ENCODE measurements at regions of chr15 and their contacts with region 1.

Region 1: GRCh38 chr15:31405200-31405920 is 78.7 kb downstream of the KLF13 start:
- DNase-seq: peak in 3 of 9 experiments; percentile 46 to 52 (median 46)
- ATAC-seq: peak; percentile 70
- H3K4me3 ChIP-seq: no peak overlapping the region
- H3K4me3 Mint-ChIP-seq: no peak overlapping the region
- H3K27ac ChIP-seq: peak overlapping the region; percentile 6 to 46
- H3K27ac Mint-ChIP-seq: peak overlapping the region; percentile 62
- H3K4me1 ChIP-seq: peaks cover 19% of the 10 kb centered on the region
- H3K4me1 Mint-ChIP-seq: peaks cover 18% of the 10 kb centered on the region
- H3K27me3 ChIP-seq: no peaks in the 10 kb centered on the region
- H3K27me3 Mint-ChIP-seq: no peaks in the 10 kb centered on the region
- CTCF ChIP-seq: no peak

Region 2: GRCh38 chr15:31098953-31099740 is 306.2 kb before region 1 on chr15:
- CTCF ChIA-PET with region 1: no interaction called
- POLR2A ChIA-PET with region 1: no interaction called
- intact Hi-C with region 1: no loop called
- DNase-seq: no peak
- ATAC-seq: no peak
- H3K4me3 ChIP-seq: no peak overlapping the region
- H3K4me3 Mint-ChIP-seq: no peak overlapping the region
- H3K27ac ChIP-seq: no peak overlapping the region
- H3K27ac Mint-ChIP-seq: no peak overlapping the region
- H3K4me1 ChIP-seq: no peaks in the 10 kb centered on the region
- H3K4me1 Mint-ChIP-seq: no peaks in the 10 kb centered on the region
- H3K27me3 ChIP-seq: no peaks in the 10 kb centered on the region
- H3K27me3 Mint-ChIP-seq: no peaks in the 10 kb centered on the region
- CTCF ChIP-seq: no peak

Region 3: GRCh38 chr15:31332020-31332680 is 73.2 kb before region 1 on chr15:
- CTCF ChIA-PET with region 1: no interaction called
- POLR2A ChIA-PET with region 1: no interaction called
- intact Hi-C with region 1: no loop called
- DNase-seq: peak in 1 of 9 experiments; percentile 36
- ATAC-seq: no peak
- H3K4me3 ChIP-seq: peak overlapping the region in 1 of 2 experiments; percentile 77
- H3K4me3 Mint-ChIP-seq: peak overlapping the region; percentile 92
- H3K27ac ChIP-seq: peak overlapping the region in 1 of 2 experiments; percentile 49
- H3K27ac Mint-ChIP-seq: peak overlapping the region; percentile 94
- H3K4me1 ChIP-seq: peaks cover 76% of the 10 kb centered on the region
- H3K4me1 Mint-ChIP-seq: peaks cover 83% of the 10 kb centered on the region
- H3K27me3 ChIP-seq: no peaks in the 10 kb centered on the region
- H3K27me3 Mint-ChIP-seq: no peaks in the 10 kb centered on the region
- CTCF ChIP-seq: no peak

Region 4: GRCh38 chr15:31427411-31427810 is 22.1 kb after region 1 on chr15:
- CTCF ChIA-PET with region 1: interaction called, 3 read pairs
- POLR2A ChIA-PET with region 1: interaction called, 3 read pairs
- intact Hi-C with region 1: loop called in 1 of 2 experiments (anchors 2 kb)
- DNase-seq: no peak
- ATAC-seq: no peak
- H3K4me3 ChIP-seq: no peak overlapping the region
- H3K4me3 Mint-ChIP-seq: no peak overlapping the region
- H3K27ac ChIP-seq: no peak overlapping the region
- H3K27ac Mint-ChIP-seq: no peak overlapping the region
- H3K4me1 ChIP-seq: no peaks in the 10 kb centered on the region
- H3K4me1 Mint-ChIP-seq: peaks cover 16% of the 10 kb centered on the region
- H3K27me3 ChIP-seq: no peaks in the 10 kb centered on the region
- H3K27me3 Mint-ChIP-seq: no peaks in the 10 kb centered on the region
- CTCF ChIP-seq: no peak

Region 5: DNA sequence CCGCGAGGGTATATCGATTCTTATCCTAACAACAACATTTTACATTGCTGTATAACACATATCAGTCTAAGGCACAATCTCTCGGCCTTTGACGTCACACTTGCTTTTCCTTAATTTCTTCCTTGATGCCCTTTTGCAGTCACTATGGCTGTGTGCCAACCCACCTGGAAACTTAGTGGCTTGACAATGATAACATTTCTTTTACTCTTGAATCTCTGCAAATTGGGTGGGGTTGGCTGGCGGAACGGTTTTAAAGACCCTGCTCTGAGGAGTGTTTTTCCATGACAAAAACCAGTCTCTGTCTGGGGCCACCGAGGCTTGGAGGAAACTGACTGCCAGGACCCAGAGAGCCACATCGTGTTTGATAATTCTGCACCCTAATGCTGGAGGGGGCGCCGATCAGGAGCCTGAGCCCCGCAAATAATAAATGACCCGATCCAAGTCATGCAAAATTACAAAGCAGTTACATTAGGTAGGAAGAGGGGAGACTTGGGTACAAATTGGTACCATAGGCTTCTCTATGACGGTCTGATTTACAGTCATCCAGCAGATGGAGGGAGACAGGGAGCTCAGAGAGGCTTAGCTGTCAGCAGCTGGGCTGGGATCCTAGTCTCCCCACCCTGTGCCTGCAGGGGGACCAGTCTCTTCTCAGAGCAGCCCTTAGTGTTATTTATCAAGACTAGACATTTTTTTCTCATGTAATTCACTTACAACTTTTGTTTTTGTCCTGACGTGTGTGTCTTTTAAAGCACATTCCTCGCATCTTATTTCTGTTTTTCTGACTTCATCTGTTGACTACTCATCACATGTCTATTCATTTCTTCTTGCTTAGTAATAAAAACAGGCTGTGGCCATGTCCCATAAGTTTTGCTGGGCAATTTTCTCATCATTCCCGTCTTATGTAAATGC is 37.1 kb after region 1 on chr15:
- CTCF ChIA-PET with region 1: no interaction called
- POLR2A ChIA-PET with region 1: no interaction called
- intact Hi-C with region 1: no loop called
- DNase-seq: peak in 3 of 9 experiments; percentile 27 to 45 (median 27)
- ATAC-seq: peak; percentile 29
- H3K4me3 ChIP-seq: no peak overlapping the region
- H3K4me3 Mint-ChIP-seq: peak overlapping the region; percentile 57
- H3K27ac ChIP-seq: no peak overlapping the region
- H3K27ac Mint-ChIP-seq: peak overlapping the region; percentile 76
- H3K4me1 ChIP-seq: peaks cover 40% of the 10 kb centered on the region
- H3K4me1 Mint-ChIP-seq: peaks cover 44% of the 10 kb centered on the region
- H3K27me3 ChIP-seq: no peaks in the 10 kb centered on the region
- H3K27me3 Mint-ChIP-seq: no peaks in the 10 kb centered on the region
- CTCF ChIP-seq: peak; percentile 16

Measured in CD8-positive, alpha-beta T cell (primary cell).